Posterior vena cava (tissue), 2 donors: ENCODE measurements at regions of chr2 and their contacts with region 1.

Region 1: GRCh38 chr2:54838585-54839035 is 115.1 kb downstream of the EML6 start:
- DNase-seq: peak; percentile 80

Region 2: DNA sequence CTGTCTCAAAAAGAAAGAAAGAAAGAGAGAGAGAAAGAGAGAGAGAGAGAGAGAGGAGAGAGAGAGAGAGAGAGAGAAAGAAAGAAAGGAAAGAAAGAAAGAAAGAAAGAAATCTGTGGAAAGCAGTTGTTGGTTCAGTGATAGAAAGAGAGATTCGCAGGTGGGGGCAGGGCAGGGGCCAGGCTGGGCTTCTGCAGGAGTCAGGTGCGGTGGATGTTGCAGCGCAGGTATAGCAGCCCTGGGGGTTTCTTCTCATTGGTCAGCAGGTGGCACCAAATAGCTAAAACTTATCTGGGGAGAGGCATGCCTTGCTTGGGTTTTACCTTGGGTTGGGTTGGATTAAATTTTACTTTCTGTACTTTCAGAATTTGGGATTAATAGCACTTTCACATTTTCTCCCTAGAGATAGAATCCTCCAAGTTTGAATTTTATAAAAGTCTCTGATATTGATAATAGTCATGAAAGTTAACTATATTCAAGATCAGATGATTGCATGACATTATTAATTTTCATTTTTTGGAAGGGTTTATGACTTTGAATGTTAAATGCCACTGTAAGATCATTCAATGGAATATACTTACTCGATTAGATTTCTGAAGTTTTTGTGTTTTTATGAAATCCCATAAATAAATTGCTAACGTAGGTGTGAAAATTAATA is 315.9 kb before region 1 on chr2:
- intact Hi-C with region 1: loop called in 1 of 2 experiments (anchors 5 kb)
- DNase-seq: no peak